Activated T-helper 2 cell treated with anti-CD3 and anti-CD28 coated beads, Interferon-gamma antibody, Interleukin-2, Interleukin-4, amounts not matched to agents 10 μg/mL and 5 μg/mL and 100 μg/mL, durations not matched to agents 14 hours and 24 hours and 36 hours (primary cell): ENCODE measurements at regions of chr6 and their contacts with region 1.

Region 1: GRCh38 chr6:109455502-109456282 is at the start of gene MICAL1:
- DNase-seq: peak; percentile 78
- H3K4me3 Mint-ChIP-seq: peak within 1 kb of the TSS; percentile 97
- H3K27ac Mint-ChIP-seq: peak within 1 kb of the TSS; percentile 94
- H3K4me1 Mint-ChIP-seq: peaks cover 60% of the 10 kb centered on the region
- H3K27me3 Mint-ChIP-seq: no peaks in the 10 kb centered on the region
- total RNA-seq, gene MICAL1: 47.8 and 51.8 TPM in 2 replicates

Region 2: GRCh38 chr6:109440331-109441068 is 15.2 kb before region 1 on chr6 and contains the starts of genes PPIL6 and SMPD2:
- intact Hi-C with region 1: loop called (anchors 1 kb)
- DNase-seq: peak; percentile 72
- H3K4me3 Mint-ChIP-seq: peak within 1 kb of the TSS; percentile 92
- H3K27ac Mint-ChIP-seq: peak within 1 kb of the TSS; percentile 92
- H3K4me1 Mint-ChIP-seq: peaks cover 17% of the 10 kb centered on the region
- H3K27me3 Mint-ChIP-seq: no peaks in the 10 kb centered on the region
- total RNA-seq, gene PPIL6: 0.32 TPM in 1 of 2 replicates, not detected in the other
- total RNA-seq, gene SMPD2: 14.7 and 17.5 TPM in 2 replicates

Region 3: GRCh38 chr6:109491207-109491938 is 35.7 kb after region 1 on chr6:
- intact Hi-C with region 1: loop called (anchors 1 kb)
- DNase-seq: peak; percentile 57
- H3K4me3 Mint-ChIP-seq: peak overlapping the region; percentile 58
- H3K27ac Mint-ChIP-seq: peak overlapping the region; percentile 94
- H3K4me1 Mint-ChIP-seq: peaks cover 51% of the 10 kb centered on the region
- H3K27me3 Mint-ChIP-seq: no peaks in the 10 kb centered on the region

Region 4: GRCh38 chr6:109690737-109691621 is 235.3 kb after region 1 on chr6 and contains the starts of genes AK9 and FIG4:
- intact Hi-C with region 1: loop called (anchors 5 kb)
- DNase-seq: peak; percentile 84
- H3K4me3 Mint-ChIP-seq: peak within 1 kb of the TSS; percentile 96
- H3K27ac Mint-ChIP-seq: peak within 1 kb of the TSS; percentile 86
- H3K4me1 Mint-ChIP-seq: peaks cover 26% of the 10 kb centered on the region
- H3K27me3 Mint-ChIP-seq: peaks cover 10% of the 10 kb centered on the region
- total RNA-seq, gene AK9: 3.1 and 3.8 TPM in 2 replicates
- total RNA-seq, gene FIG4: 8.8 and 9.5 TPM in 2 replicates